A549 (cell line): ENCODE measurements at regions of chr16 and their contacts with region 1.

Region 1: GRCh38 chr16:84925092-84925772 is 86.1 kb downstream of the ZDHHC7 start:
- DNase-seq: peak; percentile 48 to 60
- ATAC-seq: peak; percentile 67 to 90; a peak in 5 of 6 replicates
- H3K4me3 ChIP-seq: no peak overlapping the region
- H3K27ac ChIP-seq: no peak overlapping the region
- H3K4me1 ChIP-seq: peaks cover 5% of the 10 kb centered on the region; the same call in 1 of the 3 replicates
- CTCF ChIP-seq: peak; percentile 86
- EP300 ChIP-seq: no peak
- POLR2A ChIP-seq: no peak
- RAD21 ChIP-seq: peak; percentile 81 to 82

Region 2: GRCh38 chr16:84881702-84882521 is 43.3 kb before region 1 on chr16:
- CTCF ChIA-PET with region 1: interaction called, 27 read pairs
- POLR2A ChIA-PET with region 1: no interaction called
- DNase-seq: peak; percentile 61 to 67
- ATAC-seq: peak; percentile 86 to 87
- H3K4me3 ChIP-seq: no peak overlapping the region
- H3K27ac ChIP-seq: peak overlapping the region; percentile 61 to 73; a peak in 5 of 6 replicates
- H3K4me1 ChIP-seq: peaks cover 18% of the 10 kb centered on the region
- CTCF ChIP-seq: no peak
- EP300 ChIP-seq: no peak
- POLR2A ChIP-seq: no peak
- RAD21 ChIP-seq: no peak

Region 3: GRCh38 chr16:84911486-84912216 is 13.6 kb before region 1 on chr16:
- CTCF ChIA-PET with region 1: interaction called, 19 read pairs
- POLR2A ChIA-PET with region 1: no interaction called
- DNase-seq: no peak
- ATAC-seq: no peak
- H3K4me3 ChIP-seq: no peak overlapping the region
- H3K27ac ChIP-seq: no peak overlapping the region
- H3K4me1 ChIP-seq: no peaks in the 10 kb centered on the region
- CTCF ChIP-seq: no peak
- EP300 ChIP-seq: no peak
- POLR2A ChIP-seq: no peak
- RAD21 ChIP-seq: no peak

Region 4: GRCh38 chr16:84947022-84947421 is 21.8 kb after region 1 on chr16:
- CTCF ChIA-PET with region 1: interaction called, 90 read pairs
- POLR2A ChIA-PET with region 1: no interaction called
- DNase-seq: no peak
- ATAC-seq: no peak
- H3K4me3 ChIP-seq: no peak overlapping the region
- H3K27ac ChIP-seq: no peak overlapping the region
- H3K4me1 ChIP-seq: no peaks in the 10 kb centered on the region
- CTCF ChIP-seq: no peak
- EP300 ChIP-seq: no peak
- POLR2A ChIP-seq: no peak
- RAD21 ChIP-seq: no peak